Mammary epithelial cell (primary cell): ENCODE measurements at regions of chr21 and their contacts with region 1.

Region 1: DNA sequence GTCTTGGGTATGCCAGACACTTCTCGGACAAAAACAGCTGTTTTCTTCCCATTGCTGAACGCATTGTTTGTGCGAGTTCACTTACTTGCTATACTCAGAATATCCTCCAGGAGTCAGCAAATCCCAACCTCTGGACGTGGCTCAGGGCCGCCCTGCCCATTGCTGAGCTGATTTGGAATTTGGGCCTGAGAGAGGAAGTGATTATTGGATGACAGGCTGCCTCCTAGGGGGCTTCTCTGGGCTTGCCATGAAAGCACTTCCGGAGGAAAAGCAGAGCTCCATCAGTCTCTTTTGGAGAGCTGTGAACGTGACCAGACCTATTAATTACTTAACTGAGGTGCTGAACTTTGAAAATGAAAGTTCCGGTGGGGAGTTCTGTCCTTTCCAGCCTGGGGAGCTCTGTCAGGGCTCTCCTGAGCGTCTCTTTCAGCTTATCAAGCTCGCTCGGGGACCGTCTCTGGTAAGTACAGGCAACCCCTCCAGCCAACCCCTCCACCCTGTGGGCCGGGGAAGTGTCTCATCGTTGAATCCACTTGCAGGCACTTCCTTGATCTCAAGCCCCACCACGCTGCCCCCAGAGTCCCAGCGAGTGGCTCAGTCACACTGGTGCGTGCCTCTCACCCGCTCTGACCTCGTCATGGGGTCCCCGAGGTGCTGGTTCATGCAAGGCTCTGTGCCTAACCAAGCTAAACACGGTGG is 76.9 kb downstream of the CLIC6 start:
- DNase-seq: peak; percentile 63
- H3K4me3 ChIP-seq: no peak overlapping the region
- H3K27ac ChIP-seq: no peak overlapping the region
- H3K4me1 ChIP-seq: peaks cover 31% of the 10 kb centered on the region
- H3K27me3 ChIP-seq: no peaks in the 10 kb centered on the region
- CTCF ChIP-seq: peak; percentile 84 to 96

Region 2: DNA sequence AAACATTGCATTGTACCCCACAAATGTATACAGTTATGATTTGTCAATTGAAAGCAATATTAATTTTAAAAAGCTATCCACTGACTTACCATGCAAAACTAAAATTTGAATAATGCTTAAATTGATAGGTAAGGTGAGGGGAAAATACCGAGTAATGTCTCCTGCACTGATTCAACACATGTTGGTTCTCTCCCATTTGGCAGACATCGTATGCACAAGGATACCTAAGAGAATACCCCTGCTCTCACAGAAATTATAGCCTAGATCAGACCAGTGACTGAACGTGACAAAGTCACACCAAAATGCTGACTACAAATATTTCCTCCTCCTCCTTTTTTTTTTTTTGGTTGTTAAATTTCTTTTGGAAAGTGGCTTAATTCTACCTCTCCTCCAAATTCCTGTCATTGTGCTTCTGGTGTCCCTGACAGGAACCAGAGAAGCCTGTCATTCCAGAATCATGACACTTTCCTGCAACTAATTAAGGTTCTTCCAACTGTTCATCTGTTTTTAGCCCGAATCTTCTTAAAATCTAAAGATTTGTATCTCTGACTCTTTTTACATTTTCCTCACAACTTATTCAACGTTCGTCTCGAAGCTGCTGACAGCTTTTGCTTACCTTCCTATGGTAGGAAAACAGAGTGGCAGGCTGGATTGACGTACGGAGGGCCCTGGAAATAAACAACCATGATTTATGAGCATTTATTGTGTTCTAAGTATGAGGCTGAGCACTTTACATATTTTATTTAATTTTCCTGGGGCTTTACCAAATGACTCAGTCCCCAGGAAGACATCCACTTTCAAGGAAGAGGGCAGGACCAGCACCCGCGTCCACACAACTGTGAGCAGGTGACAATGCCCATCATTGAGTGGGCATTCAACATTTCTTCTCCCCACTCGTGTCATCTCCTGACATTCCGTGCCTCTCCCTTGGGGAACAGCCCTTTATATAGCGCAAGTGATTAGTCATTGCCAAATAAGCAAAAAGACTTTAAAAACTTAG is 439.8 kb before region 1 on chr21:
- CTCF ChIA-PET with region 1: no interaction called
- dilution Hi-C with region 1: no loop called
- in situ Hi-C with region 1: no loop called
- intact Hi-C with region 1: no loop called
- DNase-seq: no peak
- H3K4me3 ChIP-seq: no peak overlapping the region
- H3K27ac ChIP-seq: no peak overlapping the region
- H3K4me1 ChIP-seq: no peaks in the 10 kb centered on the region
- H3K27me3 ChIP-seq: no peaks in the 10 kb centered on the region
- CTCF ChIP-seq: no peak

Region 3: DNA sequence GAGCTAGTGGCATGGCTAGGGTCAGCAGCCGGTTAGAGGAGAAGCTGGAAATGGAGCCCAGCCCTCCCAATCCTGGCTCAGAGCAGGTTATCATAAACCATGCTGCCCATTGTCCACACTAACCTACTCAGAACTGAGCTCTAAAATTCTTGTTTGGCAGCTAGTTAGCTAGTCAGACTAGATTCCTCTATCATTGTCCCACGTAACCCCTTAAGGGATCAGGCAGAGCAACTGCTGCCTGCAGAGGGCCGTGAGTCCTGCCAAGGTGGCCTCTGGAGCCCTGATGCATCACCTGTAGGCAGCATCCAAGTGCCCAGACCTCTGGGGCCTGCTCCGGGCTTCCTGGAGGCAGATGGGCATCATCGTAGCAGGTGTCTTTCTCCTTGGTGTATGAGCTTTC is 12.9 kb after region 1 on chr21:
- CTCF ChIA-PET with region 1: no interaction called
- dilution Hi-C with region 1: no loop called
- in situ Hi-C with region 1: no loop called
- intact Hi-C with region 1: no loop called
- DNase-seq: no peak
- H3K4me3 ChIP-seq: no peak overlapping the region
- H3K27ac ChIP-seq: no peak overlapping the region
- H3K4me1 ChIP-seq: peaks cover 3% of the 10 kb centered on the region
- H3K27me3 ChIP-seq: no peaks in the 10 kb centered on the region
- CTCF ChIP-seq: no peak

Region 4: DNA sequence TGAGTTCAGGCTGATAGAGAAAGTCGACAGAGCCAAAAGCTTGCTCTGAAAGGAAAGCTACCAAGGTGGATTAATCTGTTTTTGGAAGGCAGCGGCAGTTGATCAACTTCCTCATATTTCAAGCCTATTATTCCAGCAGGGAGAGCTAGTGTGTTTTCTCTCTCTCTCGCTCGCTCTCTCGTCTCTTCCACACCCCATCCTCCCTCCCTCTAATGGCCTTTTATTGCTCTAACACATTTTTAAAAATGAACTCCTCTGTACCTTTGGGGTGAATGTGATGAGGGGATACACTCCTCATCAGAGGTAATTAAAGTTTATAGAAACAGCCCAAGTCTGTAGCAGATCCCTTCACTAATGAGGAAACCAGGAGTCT is 49.5 kb after region 1 on chr21:
- CTCF ChIA-PET with region 1: interaction called, 4 read pairs
- dilution Hi-C with region 1: no loop called
- in situ Hi-C with region 1: no loop called
- intact Hi-C with region 1: loop called (anchors 2 kb)
- DNase-seq: no peak
- H3K4me3 ChIP-seq: no peak overlapping the region
- H3K27ac ChIP-seq: peak overlapping the region; percentile 83
- H3K4me1 ChIP-seq: peaks cover 54% of the 10 kb centered on the region
- H3K27me3 ChIP-seq: no peaks in the 10 kb centered on the region
- CTCF ChIP-seq: peak in 1 of 2 donors; percentile 22

Region 5: DNA sequence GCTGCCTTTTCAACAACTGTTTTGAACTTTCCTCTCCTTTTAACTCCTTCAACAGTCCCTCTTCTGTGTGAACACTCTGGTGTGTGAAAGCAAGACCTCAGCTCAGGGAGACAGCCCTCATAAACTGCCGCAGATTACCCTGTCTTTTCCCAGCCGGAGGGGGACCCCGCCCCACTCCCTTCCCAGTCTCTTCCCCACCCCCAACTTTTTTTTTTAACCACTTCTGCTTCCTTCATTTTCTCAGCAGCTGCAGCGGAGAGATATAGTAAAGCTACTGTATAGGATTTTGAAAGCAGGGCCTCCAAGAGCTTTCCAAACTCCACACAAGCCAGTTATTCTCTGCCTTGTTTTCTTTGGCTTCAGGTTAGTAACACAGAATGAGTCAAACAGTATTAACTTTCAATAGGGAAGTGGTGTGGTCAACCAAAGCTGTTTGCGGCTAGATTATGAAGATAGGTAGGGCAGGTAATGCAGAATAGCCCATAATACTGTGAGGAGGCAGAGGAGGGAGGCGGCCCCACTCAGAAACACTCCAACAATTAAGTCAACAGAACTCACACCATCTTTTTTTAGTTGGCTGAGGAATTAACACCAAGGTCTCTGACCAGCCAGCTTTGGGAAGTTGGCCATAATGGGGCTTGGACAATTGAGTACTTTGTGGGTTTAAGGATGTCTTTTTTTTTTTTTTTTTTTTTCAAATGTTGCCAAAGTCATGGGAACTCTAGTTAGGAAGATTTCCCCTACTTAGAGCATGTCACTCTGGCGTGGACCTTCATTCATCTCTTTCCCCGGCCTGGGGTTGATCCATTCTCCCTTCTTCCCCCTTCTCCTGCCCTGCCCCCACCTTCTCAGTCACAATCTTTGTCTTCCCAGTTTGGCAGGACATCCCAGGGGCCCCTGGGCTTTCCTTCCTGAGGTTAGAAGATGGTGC is 100.1 kb after region 1 on chr21:
- CTCF ChIA-PET with region 1: interaction called, 68 read pairs
- dilution Hi-C with region 1: no loop called
- in situ Hi-C with region 1: loop called in 1 of 2 experiments (anchors 10 kb)
- intact Hi-C with region 1: loop called (anchors 1 kb)
- DNase-seq: peak; percentile 95
- H3K4me3 ChIP-seq: no peak overlapping the region
- H3K27ac ChIP-seq: peak overlapping the region; percentile 74
- H3K4me1 ChIP-seq: peaks cover 47% of the 10 kb centered on the region
- H3K27me3 ChIP-seq: no peaks in the 10 kb centered on the region
- CTCF ChIP-seq: no peak

Region 6: DNA sequence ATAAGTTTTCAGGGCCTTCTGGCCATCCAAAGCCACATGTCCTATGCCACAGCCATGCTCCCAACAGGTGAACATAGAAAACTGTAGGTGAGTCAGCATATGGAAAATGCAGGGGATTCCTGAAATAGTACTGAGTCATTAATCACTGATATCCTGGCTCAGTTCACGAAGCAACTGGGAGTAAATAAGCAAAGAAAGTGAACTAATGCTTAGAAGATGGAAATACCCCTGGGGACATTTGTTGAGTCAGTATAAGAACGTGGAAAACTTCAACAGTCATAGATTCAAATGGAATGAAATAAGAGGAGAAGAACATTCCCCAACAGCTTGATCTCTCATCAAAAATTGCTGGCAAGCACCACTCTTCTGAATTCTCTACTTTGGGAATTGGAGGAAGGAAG is 452.3 kb after region 1 on chr21:
- CTCF ChIA-PET with region 1: no interaction called
- dilution Hi-C with region 1: no loop called
- in situ Hi-C with region 1: no loop called
- intact Hi-C with region 1: loop called (anchors 10 kb)
- DNase-seq: peak; percentile 99
- H3K4me3 ChIP-seq: no peak overlapping the region
- H3K27ac ChIP-seq: peak overlapping the region; percentile 96
- H3K4me1 ChIP-seq: peaks cover 23% of the 10 kb centered on the region
- H3K27me3 ChIP-seq: no peaks in the 10 kb centered on the region
- CTCF ChIP-seq: no peak

Region 7: DNA sequence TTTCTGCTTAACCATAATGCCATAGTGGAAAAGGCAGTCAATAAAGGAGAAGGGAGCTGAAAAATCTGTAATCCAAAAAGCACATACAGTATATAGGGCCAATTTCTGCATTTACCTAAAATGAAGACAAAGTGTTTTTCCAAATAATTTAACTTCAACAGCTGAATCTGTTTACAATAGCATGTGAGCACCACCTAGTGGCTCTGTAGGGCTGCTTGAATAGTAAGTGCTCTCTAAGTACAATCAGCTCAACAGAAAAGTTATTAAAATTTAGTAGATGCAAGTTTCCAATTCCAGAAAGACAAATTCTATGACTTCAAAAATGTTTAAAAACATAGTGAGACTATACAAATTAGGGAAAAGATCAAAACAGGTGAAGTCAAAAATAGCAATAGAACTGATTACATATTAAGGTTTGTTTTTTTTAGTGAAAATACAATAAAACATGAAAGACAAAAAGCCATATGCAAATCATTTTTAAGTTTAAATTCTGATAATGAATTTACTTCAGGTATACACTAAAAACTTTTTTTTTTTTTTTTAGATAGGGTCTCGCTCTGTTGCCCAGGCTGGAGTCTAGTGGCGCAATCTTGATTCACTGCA is 1094.6 kb after region 1 on chr21:
- CTCF ChIA-PET with region 1: interaction called, 3 read pairs
- dilution Hi-C with region 1: no loop called
- in situ Hi-C with region 1: no loop called
- intact Hi-C with region 1: loop called (anchors 1 kb)
- DNase-seq: peak; percentile 59
- H3K4me3 ChIP-seq: no peak overlapping the region
- H3K27ac ChIP-seq: no peak overlapping the region
- H3K4me1 ChIP-seq: peaks cover 2% of the 10 kb centered on the region
- H3K27me3 ChIP-seq: no peaks in the 10 kb centered on the region
- CTCF ChIP-seq: peak; percentile 85 to 92